ENCODE measurements at regions of chr16 and their contacts with region 1.

Region 1: GRCh38 chr16:66608241-66609138 is 4.0 kb downstream of the CMTM3 start:
- DNase-seq: peak; percentile 69 to 85 (median 74)
- H3K4me3 ChIP-seq: no peak overlapping the region
- H3K4me3 Mint-ChIP-seq: peak overlapping the region in 4 of 7 donors; percentile 42 to 67 (median 45)
- H3K27ac ChIP-seq: no peak overlapping the region
- H3K27ac Mint-ChIP-seq: peak overlapping the region; percentile 30 to 93 (median 72)
- H3K4me1 ChIP-seq: peaks cover 33% of the 10 kb centered on the region
- H3K4me1 Mint-ChIP-seq: peaks cover 31 to 43% (median 33%) of the 10 kb centered on the region in 3 donors
- H3K27me3 ChIP-seq: no peaks in the 10 kb centered on the region
- H3K27me3 Mint-ChIP-seq: peaks cover 0 to 1% of the 10 kb centered on the region in 2 donors

Region 2: DNA sequence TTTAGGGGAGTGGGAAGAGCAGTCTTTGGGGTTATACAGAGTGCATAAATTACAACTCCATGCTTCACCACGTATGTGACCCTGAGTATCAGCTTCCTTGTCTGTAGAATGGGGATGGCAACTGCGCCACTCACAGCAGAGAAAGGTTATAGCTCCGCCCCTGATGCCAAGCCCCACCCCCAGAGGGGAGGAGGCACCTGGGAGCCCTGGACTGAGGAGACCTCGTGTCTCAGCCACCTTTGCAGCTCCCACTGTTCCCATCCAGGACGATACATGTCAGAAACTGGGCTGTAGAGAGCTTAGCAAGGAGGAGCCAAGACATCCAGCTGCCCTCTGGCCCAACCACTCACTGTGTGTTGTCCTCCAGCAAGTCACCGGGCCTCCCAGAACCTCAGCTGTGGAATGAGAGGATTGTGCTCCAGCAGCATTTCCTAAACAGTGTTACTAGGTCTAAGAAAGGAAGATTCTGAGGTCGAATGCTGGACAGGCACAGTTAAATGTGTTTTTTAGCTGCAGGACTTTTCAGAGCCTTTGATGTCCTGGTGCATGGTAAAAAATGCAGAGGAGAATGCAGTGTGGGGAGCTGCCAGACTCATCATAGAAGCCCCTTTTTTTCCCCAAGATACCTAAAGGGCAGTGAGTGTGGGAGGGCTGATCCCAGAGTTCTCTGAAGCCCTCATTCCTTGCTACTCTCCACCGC is 132.0 kb before region 1 on chr16:
- CTCF ChIA-PET with region 1: interaction called, 11 read pairs
- POLR2A ChIA-PET with region 1: interaction called, 3 read pairs
- DNase-seq: peak in 2 of 5 donors; percentile 14 to 25
- H3K4me3 ChIP-seq: no peak overlapping the region
- H3K4me3 Mint-ChIP-seq: no peak overlapping the region
- H3K27ac ChIP-seq: no peak overlapping the region
- H3K27ac Mint-ChIP-seq: peak overlapping the region in 1 of 8 donors; percentile 78
- H3K4me1 ChIP-seq: peaks cover 25% of the 10 kb centered on the region
- H3K4me1 Mint-ChIP-seq: peaks cover 28 to 36% (median 34%) of the 10 kb centered on the region in 3 donors
- H3K27me3 ChIP-seq: no peaks in the 10 kb centered on the region
- H3K27me3 Mint-ChIP-seq: no peaks in the 10 kb centered on the region

Region 3: DNA sequence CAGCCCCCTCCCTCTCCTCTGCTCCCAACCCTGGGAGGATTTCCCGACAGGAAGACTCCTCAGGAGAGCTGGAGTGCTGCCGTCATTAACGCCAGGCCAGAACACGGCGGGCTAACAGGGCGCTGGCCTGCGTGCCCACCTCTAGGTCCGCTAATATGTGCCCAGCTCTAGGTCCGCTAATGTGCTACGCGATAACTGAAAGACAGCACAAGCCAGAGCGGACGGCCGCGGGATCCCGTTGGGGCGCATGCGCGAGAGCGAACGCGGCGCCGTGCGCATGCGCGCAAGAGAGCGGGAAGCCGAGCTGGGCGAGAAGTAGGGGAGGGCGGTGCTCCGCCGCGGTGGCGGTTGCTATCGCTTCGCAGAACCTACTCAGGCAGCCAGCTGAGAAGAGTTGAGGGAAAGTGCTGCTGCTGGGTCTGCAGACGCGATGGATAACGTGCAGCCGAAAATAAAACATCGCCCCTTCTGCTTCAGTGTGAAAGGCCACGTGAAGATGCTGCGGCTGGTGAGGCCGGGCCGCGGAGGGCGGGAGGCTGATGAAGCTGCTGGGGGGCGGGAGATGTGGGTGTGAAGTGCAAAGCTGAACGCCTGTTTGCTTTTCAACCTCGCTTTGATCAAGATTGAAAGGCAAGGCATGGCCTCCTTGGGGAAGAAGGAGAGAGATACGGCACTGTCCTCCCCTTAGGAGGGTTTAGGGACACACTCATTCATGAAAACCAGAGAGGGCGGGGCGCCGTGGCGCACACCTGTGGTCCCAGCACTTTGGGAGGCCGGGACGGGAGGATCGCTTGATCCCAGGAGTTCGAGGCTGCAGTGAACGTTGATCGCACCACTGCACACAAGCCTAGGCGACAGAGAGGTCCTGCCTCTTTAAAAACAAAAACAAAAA is 56.0 kb before region 1 on chr16 and contains the start of gene CKLF:
- CTCF ChIA-PET with region 1: interaction called, 20 read pairs
- POLR2A ChIA-PET with region 1: interaction called, 15 read pairs
- DNase-seq: peak; percentile 85 to 94 (median 92)
- H3K4me3 ChIP-seq: peak within 1 kb of the TSS; percentile 87
- H3K4me3 Mint-ChIP-seq: peak within 1 kb of the TSS; percentile 90 to 98 (median 97)
- H3K27ac ChIP-seq: peak within 1 kb of the TSS; percentile 85
- H3K27ac Mint-ChIP-seq: peak within 1 kb of the TSS; percentile 92 to 98 (median 96)
- H3K4me1 ChIP-seq: peaks cover 72% of the 10 kb centered on the region
- H3K4me1 Mint-ChIP-seq: peaks cover 76 to 88% (median 86%) of the 10 kb centered on the region in 3 donors
- H3K27me3 ChIP-seq: no peaks in the 10 kb centered on the region
- H3K27me3 Mint-ChIP-seq: peaks cover 0 to 5% of the 10 kb centered on the region in 2 donors
- total RNA-seq, gene CKLF: 118 to 121 TPM

Region 4: GRCh38 chr16:66588981-66589713 is 19.3 kb before region 1 on chr16:
- CTCF ChIA-PET with region 1: interaction called, 23 read pairs
- POLR2A ChIA-PET with region 1: interaction called, 13 read pairs
- DNase-seq: peak; percentile 51 to 86 (median 58)
- H3K4me3 ChIP-seq: no peak overlapping the region
- H3K4me3 Mint-ChIP-seq: peak overlapping the region; percentile 51 to 87 (median 85)
- H3K27ac ChIP-seq: no peak overlapping the region
- H3K27ac Mint-ChIP-seq: peak overlapping the region; percentile 45 to 92 (median 84)
- H3K4me1 ChIP-seq: peaks cover 20% of the 10 kb centered on the region
- H3K4me1 Mint-ChIP-seq: peaks cover 17 to 21% (median 20%) of the 10 kb centered on the region in 3 donors
- H3K27me3 ChIP-seq: no peaks in the 10 kb centered on the region
- H3K27me3 Mint-ChIP-seq: peaks cover 0 to 3% of the 10 kb centered on the region in 2 donors

Region 5: DNA sequence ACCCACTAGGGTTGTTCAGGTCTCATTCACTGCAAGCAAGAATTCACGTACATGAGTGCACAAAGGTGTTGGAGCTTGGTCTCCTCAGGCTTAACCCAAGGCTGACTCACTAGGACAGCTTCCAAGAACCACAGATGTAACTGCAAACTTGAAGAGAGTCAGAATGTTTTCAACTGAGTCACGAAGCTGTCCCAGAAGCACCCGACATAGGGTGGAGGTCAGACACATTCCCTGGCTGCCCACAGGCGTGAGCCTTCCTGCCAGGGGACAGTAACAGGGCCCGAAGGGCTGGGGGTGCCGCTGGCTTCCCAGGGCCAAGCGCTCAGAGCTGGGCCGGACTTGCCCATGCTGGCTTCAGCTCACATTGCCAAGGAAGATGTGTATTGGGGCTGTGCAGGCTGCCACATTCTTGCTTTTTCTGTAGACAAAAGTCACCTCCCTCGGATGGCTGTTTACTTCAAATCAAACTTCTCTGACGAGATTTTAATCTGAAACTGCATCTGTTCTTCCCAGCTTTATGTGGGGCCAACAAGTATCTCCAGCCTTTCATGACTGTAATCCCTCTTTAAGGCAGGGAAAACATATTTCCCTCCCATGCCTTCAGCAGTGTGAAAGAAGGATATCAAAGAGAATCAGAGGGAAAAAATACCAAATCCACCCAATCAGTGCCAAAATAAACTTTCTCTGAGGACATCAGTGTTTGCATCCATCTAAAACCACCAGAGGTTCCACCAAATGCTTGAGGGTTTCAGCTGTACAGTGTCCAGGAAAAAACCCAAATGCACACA is 10.3 kb after region 1 on chr16:
- CTCF ChIA-PET with region 1: interaction called, 12 read pairs
- POLR2A ChIA-PET with region 1: no interaction called
- DNase-seq: no peak
- H3K4me3 ChIP-seq: no peak overlapping the region
- H3K4me3 Mint-ChIP-seq: no peak overlapping the region
- H3K27ac ChIP-seq: no peak overlapping the region
- H3K27ac Mint-ChIP-seq: no peak overlapping the region
- H3K4me1 ChIP-seq: no peaks in the 10 kb centered on the region
- H3K4me1 Mint-ChIP-seq: peaks cover 0 to 6% (median 0%) of the 10 kb centered on the region in 3 donors
- H3K27me3 ChIP-seq: no peaks in the 10 kb centered on the region
- H3K27me3 Mint-ChIP-seq: no peaks in the 10 kb centered on the region

Region 6: GRCh38 chr16:66924527-66925321 is 316.2 kb after region 1 on chr16:
- CTCF ChIA-PET with region 1: no interaction called
- POLR2A ChIA-PET with region 1: no interaction called
- DNase-seq: peak in 4 of 5 donors; percentile 18 to 37 (median 32)
- H3K4me3 ChIP-seq: no peak overlapping the region
- H3K4me3 Mint-ChIP-seq: peak overlapping the region in 6 of 7 donors; percentile 38 to 74 (median 53)
- H3K27ac ChIP-seq: no peak overlapping the region
- H3K27ac Mint-ChIP-seq: no peak overlapping the region
- H3K4me1 ChIP-seq: no peaks in the 10 kb centered on the region
- H3K4me1 Mint-ChIP-seq: peaks cover 0 to 12% (median 2%) of the 10 kb centered on the region in 3 donors
- H3K27me3 ChIP-seq: peaks cover 13% of the 10 kb centered on the region
- H3K27me3 Mint-ChIP-seq: peaks cover 30 to 46% of the 10 kb centered on the region in 2 donors